ENCODE measurements at regions of chr11 and their contacts with region 1.

Region 1: GRCh38 chr11:695538-696248 is at the start of gene TMEM80:
- DNase-seq: peak; percentile 93
- H3K4me3 ChIP-seq: peak within 1 kb of the TSS; percentile 79
- H3K27ac ChIP-seq: peak within 1 kb of the TSS; percentile 100
- H3K27me3 ChIP-seq: no peaks in the 10 kb centered on the region
- CTCF ChIP-seq: no peak
- polyA plus RNA-seq, gene TMEM80: 16.2 and 18.7 TPM in 2 replicates

Region 2: DNA sequence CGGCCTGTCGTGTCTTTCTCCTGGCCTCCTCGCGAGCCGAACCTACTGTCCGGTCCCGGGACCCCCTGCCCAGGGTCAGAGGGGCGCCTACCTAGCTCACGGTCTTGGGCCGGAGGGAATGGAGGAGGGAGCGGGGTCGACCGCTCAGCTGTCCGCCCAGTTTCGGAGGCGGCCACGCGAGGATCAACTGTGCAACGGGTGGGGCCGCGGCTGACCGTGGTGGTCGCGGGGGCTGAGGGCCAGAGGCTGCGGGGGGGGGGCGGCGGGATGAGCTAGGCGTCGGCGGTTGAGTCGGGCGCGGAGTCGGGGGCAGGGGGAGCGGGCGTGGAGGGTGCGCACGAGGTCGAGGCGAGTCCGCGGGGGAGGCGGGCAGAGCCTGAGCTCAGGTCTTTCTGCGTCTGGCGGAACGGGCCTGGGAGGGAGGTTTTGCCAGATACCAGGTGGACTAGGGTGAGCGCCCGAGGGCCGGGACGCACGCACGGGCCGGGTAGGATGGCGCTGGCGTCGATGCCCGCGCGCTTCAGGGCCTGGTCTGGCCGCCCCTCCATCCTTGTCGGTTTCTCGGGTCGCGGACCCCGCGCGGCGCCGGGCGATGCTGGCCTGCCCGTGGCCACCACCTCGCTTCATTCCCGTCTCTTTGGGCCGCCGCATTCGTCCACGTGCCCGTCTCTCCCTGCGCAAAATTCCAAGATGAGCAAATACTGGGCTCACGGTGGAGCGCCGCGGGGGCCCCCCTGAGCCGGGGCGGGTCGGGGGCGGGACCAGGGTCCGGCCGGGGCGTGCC is 59.0 kb before region 1 on chr11:
- CTCF ChIA-PET with region 1: no interaction called
- POLR2A ChIA-PET with region 1: interaction called, 11 read pairs
- DNase-seq: no peak
- H3K4me3 ChIP-seq: peak overlapping the region; percentile 27; the same call in 1 of the 2 replicates
- H3K27ac ChIP-seq: no peak overlapping the region
- H3K27me3 ChIP-seq: peaks cover 32% of the 10 kb centered on the region
- CTCF ChIP-seq: no peak

Region 3: DNA sequence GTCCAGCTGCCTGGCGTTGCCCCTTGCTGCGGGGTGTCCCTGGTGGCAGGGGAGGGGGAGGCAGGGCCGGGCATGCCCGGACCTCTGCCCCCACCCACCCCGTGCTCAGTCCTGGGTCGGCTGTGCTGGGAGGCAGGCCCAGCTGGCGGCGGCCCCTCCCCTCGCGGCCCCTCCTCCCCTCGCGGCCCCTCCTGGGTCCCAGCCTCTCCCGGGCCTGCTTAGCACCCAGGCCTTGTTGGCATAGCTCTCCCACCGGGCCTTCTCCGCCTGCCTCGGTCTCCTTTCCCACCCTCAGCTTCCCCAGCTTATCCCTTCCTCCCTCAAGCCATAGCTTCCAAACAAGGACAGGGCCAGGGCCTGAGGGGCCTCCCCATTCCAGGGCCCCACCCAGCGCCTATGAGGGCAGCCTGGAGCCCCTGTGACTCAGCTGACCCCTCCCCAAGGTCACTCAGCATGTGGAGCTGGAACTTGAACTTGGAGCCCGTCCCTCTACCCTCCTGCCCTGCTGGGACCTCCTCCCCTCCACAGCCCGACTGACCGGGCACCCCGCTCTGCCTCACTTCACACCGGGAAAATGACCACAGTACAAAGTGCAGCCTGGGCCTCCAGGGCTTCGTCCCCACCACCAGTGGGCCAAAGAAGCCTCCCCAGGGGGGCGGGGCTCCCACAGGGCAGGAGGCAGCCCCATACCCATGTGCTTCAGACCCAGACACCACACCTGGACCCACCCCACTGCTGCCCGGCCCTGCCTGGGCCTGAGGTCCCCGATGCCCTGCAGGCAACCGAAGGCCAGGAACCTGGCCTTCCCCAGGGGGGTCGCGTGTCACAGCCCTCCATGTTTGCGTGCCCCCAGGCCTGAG is 11.5 kb after region 1 on chr11:
- CTCF ChIA-PET with region 1: no interaction called
- POLR2A ChIA-PET with region 1: interaction called, 11 read pairs
- DNase-seq: no peak
- H3K4me3 ChIP-seq: peak overlapping the region; percentile 67
- H3K27ac ChIP-seq: peak overlapping the region; percentile 31
- H3K27me3 ChIP-seq: no peaks in the 10 kb centered on the region
- CTCF ChIP-seq: no peak

Region 4: DNA sequence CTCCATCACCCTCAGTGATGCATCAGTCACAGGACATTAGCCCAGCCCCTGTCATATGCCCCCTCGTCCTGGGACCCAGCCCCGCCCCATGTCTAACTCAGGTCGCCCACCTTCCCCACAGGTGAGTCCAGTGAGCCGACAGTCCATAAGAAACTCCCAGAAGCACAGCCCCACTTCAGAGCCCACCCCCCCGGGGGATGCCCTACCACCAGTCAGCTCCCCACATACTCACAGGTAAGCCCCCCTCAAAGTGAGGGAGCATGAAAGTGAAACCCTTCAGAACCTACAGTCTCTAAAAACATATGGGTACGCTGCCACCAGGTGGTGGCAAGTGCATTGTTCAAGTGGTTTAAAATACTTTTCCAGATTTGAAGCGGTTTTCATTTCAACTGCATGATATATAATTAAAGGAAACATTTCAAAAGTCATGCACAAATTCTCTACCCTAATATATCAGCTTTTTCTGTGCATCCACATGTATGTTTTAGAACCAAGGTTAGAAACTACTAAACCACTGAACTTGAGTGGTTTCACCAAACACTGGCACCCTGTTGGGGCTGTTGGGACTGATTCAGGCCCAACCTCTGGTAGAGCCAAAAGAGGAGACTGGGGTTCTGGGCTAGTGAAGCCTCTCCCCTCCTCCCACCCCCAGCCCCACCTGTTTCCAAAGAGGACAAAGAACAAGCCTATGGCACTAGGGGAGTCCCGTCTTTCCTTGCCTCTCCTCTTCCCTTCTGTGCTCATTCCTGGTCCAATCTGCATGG is 27.6 kb after region 1 on chr11:
- CTCF ChIA-PET with region 1: interaction called, 23 read pairs
- POLR2A ChIA-PET with region 1: interaction called, 10 read pairs
- DNase-seq: no peak
- H3K4me3 ChIP-seq: no peak overlapping the region
- H3K27ac ChIP-seq: no peak overlapping the region
- H3K27me3 ChIP-seq: peaks cover 30% of the 10 kb centered on the region
- CTCF ChIP-seq: peak; percentile 69

Region 5: DNA sequence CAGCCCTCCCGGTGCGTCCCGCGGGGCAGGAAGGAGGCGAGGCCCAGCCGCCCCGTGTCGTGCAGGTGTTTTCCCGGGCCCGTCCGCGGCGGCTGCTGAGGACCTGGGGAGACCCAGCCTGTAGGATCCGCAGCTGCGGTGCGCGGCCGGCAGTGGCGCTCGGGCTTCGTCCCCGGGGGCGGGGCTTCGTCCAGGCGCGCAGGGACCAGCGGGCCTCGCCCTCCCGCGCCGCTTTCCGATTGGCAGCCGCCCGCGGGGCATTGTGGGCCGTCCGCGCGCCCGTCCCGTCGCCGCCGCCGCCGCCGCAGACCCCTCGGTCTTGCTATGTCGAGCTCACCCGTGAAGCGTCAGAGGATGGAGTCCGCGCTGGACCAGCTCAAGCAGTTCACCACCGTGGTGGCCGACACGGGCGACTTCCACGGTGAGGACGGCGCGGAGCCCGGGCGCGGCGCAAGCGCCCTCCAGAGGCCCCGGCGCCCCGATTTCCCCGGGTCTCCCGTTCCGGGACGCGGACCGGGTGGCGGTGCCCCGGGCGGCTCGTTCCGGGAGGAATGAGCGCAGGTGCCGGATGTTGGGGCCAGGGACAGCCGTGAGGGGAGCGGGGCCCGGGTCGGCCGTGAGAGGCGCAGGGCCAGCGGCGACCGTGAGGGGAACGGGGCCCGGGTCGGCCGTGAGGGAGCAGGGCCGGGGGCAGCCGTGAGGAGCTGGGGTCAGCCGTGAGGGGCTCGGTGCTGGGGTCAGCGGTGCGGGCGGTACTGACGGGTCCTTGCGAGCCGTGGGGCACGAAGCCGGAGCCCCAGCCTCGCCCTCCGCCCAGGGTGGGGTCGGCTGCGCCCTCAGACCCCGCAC is 51.7 kb after region 1 on chr11 and contains the start of gene TALDO1:
- CTCF ChIA-PET with region 1: no interaction called
- POLR2A ChIA-PET with region 1: interaction called, 10 read pairs
- DNase-seq: peak; percentile 37
- H3K4me3 ChIP-seq: peak within 1 kb of the TSS; percentile 81
- H3K27ac ChIP-seq: peak within 1 kb of the TSS; percentile 74
- H3K27me3 ChIP-seq: no peaks in the 10 kb centered on the region
- CTCF ChIP-seq: peak; percentile 1; the same call in 1 of the 2 replicates
- polyA plus RNA-seq, gene TALDO1: 242 and 286 TPM in 2 replicates

Region 6: GRCh38 chr11:832321-833113 is 136.8 kb after region 1 on chr11 and contains the start of gene CD151:
- CTCF ChIA-PET with region 1: no interaction called
- POLR2A ChIA-PET with region 1: no interaction called
- DNase-seq: no peak
- H3K4me3 ChIP-seq: peak within 1 kb of the TSS; percentile 77
- H3K27ac ChIP-seq: peak within 1 kb of the TSS; percentile 57
- H3K27me3 ChIP-seq: no peaks in the 10 kb centered on the region
- CTCF ChIP-seq: no peak
- polyA plus RNA-seq, gene CD151: 559 and 909 TPM in 2 replicates